ENCODE measurements at regions of chr14 and their contacts with region 1.

Region 1: GRCh38 chr14:40630449-40630848 is 976.2 kb upstream of the LRFN5 start:
- DNase-seq: no peak
- H3K4me3 ChIP-seq: no peak overlapping the region
- H3K27ac ChIP-seq: no peak overlapping the region
- H3K4me1 ChIP-seq: no peaks in the 10 kb centered on the region
- H3K27me3 ChIP-seq: no peaks in the 10 kb centered on the region
- CTCF ChIP-seq: no peak
- EP300 ChIP-seq: no peak
- POLR2A ChIP-seq: no peak

Region 2: GRCh38 chr14:40074195-40074594 is 556.3 kb before region 1 on chr14:
- in situ Hi-C with region 1: no loop called
- intact Hi-C with region 1: no loop called
- DNase-seq: no peak
- H3K4me3 ChIP-seq: no peak overlapping the region
- H3K27ac ChIP-seq: no peak overlapping the region
- H3K4me1 ChIP-seq: no peaks in the 10 kb centered on the region
- H3K27me3 ChIP-seq: no peaks in the 10 kb centered on the region
- CTCF ChIP-seq: no peak
- EP300 ChIP-seq: no peak
- POLR2A ChIP-seq: no peak

Region 3: DNA sequence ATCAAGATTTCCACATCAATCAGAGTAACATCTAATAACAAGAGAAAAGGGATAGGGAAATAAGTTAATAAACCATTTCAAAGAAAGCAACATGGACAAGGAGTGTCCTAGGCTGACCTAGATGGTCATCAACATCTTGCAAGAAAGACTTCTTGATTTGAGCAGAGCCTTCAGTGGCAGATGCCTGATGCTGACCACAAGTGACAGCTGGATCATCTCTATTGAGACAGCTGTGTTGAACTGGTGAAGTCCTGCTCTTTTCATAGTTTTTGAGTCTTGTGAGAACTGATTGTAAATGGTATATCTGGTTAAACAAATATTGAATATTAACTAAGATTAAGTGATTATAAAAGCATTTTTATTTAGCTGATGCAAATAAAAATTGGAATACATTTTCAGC is 107.3 kb before region 1 on chr14:
- in situ Hi-C with region 1: no loop called
- intact Hi-C with region 1: no loop called
- DNase-seq: no peak
- H3K4me3 ChIP-seq: no peak overlapping the region
- H3K27ac ChIP-seq: no peak overlapping the region
- H3K4me1 ChIP-seq: no peaks in the 10 kb centered on the region
- H3K27me3 ChIP-seq: no peaks in the 10 kb centered on the region
- CTCF ChIP-seq: no peak
- EP300 ChIP-seq: no peak
- POLR2A ChIP-seq: no peak

Region 4: DNA sequence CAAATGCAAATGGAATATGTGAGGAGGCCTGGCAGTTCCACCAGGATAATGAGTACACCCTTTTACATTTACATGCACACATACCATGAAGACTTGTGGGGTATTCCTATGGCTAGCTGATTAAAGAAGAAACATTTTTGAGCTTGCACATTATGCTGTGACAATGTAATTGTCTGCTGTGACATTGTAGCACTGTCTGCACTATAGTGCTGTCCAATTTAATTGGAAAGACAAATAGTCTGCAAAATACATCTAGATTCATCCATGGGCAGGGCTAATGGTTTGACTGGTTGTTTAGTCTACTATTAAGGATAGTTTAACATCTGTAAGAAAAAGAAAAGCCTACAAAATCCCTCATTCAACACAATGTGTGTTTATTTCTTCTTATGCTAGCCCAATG is 29.4 kb before region 1 on chr14:
- in situ Hi-C with region 1: no loop called
- intact Hi-C with region 1: loop called (anchors 1 kb)
- DNase-seq: no peak
- H3K4me3 ChIP-seq: no peak overlapping the region
- H3K27ac ChIP-seq: no peak overlapping the region
- H3K4me1 ChIP-seq: no peaks in the 10 kb centered on the region
- H3K27me3 ChIP-seq: no peaks in the 10 kb centered on the region
- CTCF ChIP-seq: no peak
- EP300 ChIP-seq: no peak
- POLR2A ChIP-seq: no peak

Region 5: GRCh38 chr14:40909898-40910297 is 279.4 kb after region 1 on chr14:
- in situ Hi-C with region 1: no loop called
- intact Hi-C with region 1: no loop called
- DNase-seq: no peak
- H3K4me3 ChIP-seq: no peak overlapping the region
- H3K27ac ChIP-seq: no peak overlapping the region
- H3K4me1 ChIP-seq: no peaks in the 10 kb centered on the region
- H3K27me3 ChIP-seq: no peaks in the 10 kb centered on the region
- CTCF ChIP-seq: no peak
- EP300 ChIP-seq: no peak
- POLR2A ChIP-seq: no peak

Measured in transverse colon (tissue), 4 donors.